K562 (cell line): ENCODE measurements at regions of chr9 and their contacts with region 1.

Region 1: GRCh38 chr9:122264360-122265148 is at the starts of genes MRRF and RBM18:
- DNase-seq: peak; percentile 89 to 96 (median 90)
- ATAC-seq: peak; percentile 89
- H3K4me3 ChIP-seq: peak within 1 kb of the TSS; percentile 85
- H3K27ac ChIP-seq: peak within 1 kb of the TSS; percentile 94
- H3K4me1 ChIP-seq: peaks cover 0 to 26% of the 10 kb centered on the region in 2 experiments; a peak in 2 of 5 replicates
- H3K27me3 ChIP-seq: no peaks in the 10 kb centered on the region
- CTCF ChIP-seq: 0 out of 6 replicates have a peak, but pooled peaks of 1 of the 3 experiments have one; percentile 6
- EP300 ChIP-seq: no peak
- POLR2A ChIP-seq: peak; percentile 89
- RAD21 ChIP-seq: no peak
- polyA plus RNA-seq, gene MRRF: 78.6 to 95.1 TPM
- polyA plus RNA-seq, gene RBM18: 84.1 to 86.3 TPM

Region 2: DNA sequence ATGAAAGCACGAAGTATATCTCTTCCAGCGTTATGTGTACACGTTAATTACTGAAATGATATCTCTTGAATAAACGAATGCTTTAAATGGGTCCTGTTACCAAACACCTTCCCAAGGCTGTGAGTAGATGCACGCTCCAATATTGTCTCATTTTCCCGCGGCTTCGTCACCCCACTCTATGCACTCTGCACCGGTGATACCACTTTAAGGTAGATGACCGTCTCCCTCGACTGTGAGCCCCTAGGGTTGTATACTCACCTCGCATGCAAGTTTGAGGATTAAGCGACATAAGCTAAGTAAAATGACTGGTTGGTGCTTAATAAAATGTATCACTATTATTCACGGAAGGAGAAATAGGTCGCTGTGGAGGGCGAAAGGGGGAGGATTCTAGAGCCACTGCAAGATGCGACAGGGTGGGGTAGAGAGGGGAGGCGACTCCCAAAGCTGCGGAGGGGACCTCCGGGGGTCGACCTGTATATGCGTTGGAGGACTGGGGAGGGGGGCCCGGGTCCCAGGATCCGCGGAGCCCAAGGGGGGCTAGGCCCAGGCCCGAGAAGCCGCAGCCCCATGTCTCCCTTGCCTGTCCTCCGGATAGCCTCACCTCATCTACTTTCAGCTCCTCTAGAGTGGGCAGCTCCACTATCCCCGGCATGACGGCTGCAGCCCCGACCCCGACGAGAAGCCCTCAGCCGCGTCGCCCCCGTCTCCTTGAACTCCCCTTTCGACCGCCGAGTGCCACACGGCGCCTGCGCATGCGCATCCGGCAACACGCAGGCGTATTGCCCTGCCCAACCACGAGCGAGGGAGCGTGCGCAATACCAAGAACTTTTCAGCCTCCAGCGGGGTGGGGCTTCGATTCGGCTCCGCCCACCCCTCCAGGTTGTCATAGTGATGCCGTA is 105.3 kb before region 1 on chr9 and contains the starts of genes MORN5 and NDUFA8:
- CTCF ChIA-PET with region 1: no interaction called
- POLR2A ChIA-PET with region 1: no interaction called
- in situ Hi-C with region 1: no loop called
- intact Hi-C with region 1: loop called (anchors 5 kb)
- DNase-seq: peak; percentile 98 to 99 (median 99)
- ATAC-seq: peak; percentile 96
- H3K4me3 ChIP-seq: peak within 1 kb of the TSS; percentile 93
- H3K27ac ChIP-seq: peak within 1 kb of the TSS; percentile 90
- H3K4me1 ChIP-seq: peaks cover 8 to 11% of the 10 kb centered on the region in 2 experiments; a peak in 4 of 5 replicates
- H3K27me3 ChIP-seq: no peaks in the 10 kb centered on the region; a peak in 1 of 5 replicates
- CTCF ChIP-seq: no peak
- EP300 ChIP-seq: no peak
- POLR2A ChIP-seq: peak; percentile 93
- RAD21 ChIP-seq: no peak
- polyA plus RNA-seq, gene MORN5: not detected
- polyA plus RNA-seq, gene NDUFA8: 126 to 189 TPM

Region 3: DNA sequence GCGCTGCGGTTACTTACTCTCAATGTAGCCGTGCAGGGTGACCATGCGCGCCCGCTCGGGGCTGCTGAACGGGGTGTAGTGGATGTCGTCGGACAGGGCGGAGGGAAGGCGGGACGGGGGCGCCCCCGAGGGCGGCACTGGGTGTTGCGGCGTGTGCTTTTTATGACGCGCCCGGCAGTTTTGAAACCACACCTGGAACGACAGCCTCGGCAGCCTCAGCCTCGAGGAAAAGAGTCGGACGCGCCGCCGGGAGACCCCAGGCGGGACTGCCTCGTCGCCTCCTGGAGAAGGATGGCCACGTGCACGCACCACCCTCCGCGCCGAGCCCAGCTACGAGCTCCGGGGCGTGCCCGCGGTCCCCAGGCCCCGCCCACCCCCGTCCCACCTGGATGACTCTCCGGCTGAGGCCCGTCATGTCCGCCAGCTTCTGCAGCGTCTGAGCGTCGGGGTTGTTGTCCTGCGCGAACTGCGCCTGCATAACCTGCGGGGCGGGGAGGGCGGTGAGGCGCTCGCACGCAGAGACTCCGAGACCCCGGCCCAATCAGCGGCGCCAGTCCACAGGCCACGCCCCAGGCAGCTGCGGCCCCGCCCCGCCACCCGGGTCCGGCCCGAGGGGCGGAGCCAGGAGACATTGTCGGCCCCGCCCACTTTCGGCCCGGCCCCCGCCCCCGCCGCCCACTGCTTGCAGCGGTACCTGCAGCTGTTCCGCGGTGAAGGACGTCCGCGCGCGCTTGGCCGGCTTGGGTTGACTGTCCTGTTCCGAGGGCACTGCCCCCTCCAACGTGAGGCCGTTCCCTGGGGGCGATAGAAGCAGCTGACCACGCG is 50.8 kb before region 1 on chr9:
- CTCF ChIA-PET with region 1: no interaction called
- POLR2A ChIA-PET with region 1: interaction called, 4 read pairs
- in situ Hi-C with region 1: no loop called
- intact Hi-C with region 1: loop called (anchors 2 kb)
- DNase-seq: peak; percentile 96 to 100 (median 99)
- ATAC-seq: peak; percentile 98
- H3K4me3 ChIP-seq: peak overlapping the region; percentile 58
- H3K27ac ChIP-seq: peak overlapping the region; percentile 76
- H3K4me1 ChIP-seq: peaks cover 23 to 31% of the 10 kb centered on the region in 2 experiments; a peak in 4 of 5 replicates
- H3K27me3 ChIP-seq: no peaks in the 10 kb centered on the region
- CTCF ChIP-seq: peak in 2 of 3 experiments; percentile 17 to 27; a peak in 3 of 6 replicates
- EP300 ChIP-seq: no peak
- POLR2A ChIP-seq: no peak; the same call in 1 of the 2 replicates
- RAD21 ChIP-seq: no peak

Region 4: GRCh38 chr9:122286764-122287163 is 22.2 kb after region 1 on chr9:
- CTCF ChIA-PET with region 1: no interaction called
- POLR2A ChIA-PET with region 1: interaction called, 11 read pairs
- in situ Hi-C with region 1: no loop called
- intact Hi-C with region 1: no loop called
- DNase-seq: no peak
- ATAC-seq: no peak
- H3K4me3 ChIP-seq: no peak overlapping the region
- H3K27ac ChIP-seq: no peak overlapping the region
- H3K4me1 ChIP-seq: no peaks in the 10 kb centered on the region
- H3K27me3 ChIP-seq: no peaks in the 10 kb centered on the region
- CTCF ChIP-seq: no peak
- EP300 ChIP-seq: no peak
- POLR2A ChIP-seq: no peak
- RAD21 ChIP-seq: no peak

Region 5: DNA sequence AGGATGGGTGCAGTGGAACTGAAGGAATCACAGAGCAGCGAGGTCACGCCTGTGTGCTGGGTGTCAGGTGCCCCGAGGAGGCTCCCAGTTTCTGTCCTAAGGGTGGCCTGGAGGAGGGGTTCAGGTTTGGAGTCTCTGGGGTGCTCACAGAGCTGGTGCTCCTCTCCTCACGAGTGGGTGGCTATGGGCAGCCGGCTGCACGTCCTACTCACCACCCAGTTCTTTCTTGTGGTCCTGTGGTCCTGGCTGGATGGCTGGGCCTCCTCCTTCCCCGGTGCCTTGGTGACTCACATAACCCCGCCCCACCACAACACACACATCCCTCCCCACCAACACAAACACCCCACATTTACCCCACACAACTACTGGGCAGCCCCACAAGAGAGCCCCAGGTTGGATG is 96.3 kb after region 1 on chr9:
- CTCF ChIA-PET with region 1: no interaction called
- POLR2A ChIA-PET with region 1: no interaction called
- in situ Hi-C with region 1: no loop called
- intact Hi-C with region 1: no loop called
- DNase-seq: no peak
- ATAC-seq: no peak
- H3K4me3 ChIP-seq: no peak overlapping the region
- H3K27ac ChIP-seq: no peak overlapping the region
- H3K4me1 ChIP-seq: peaks cover 0 to 3% of the 10 kb centered on the region in 2 experiments; a peak in 1 of 5 replicates
- H3K27me3 ChIP-seq: peaks cover 2 to 12% of the 10 kb centered on the region in 2 experiments; a peak in 2 of 5 replicates
- CTCF ChIP-seq: no peak
- EP300 ChIP-seq: no peak
- POLR2A ChIP-seq: no peak
- RAD21 ChIP-seq: no peak